ENCODE measurements at regions of chr10 and their contacts with region 1.

Region 1: GRCh38 chr10:18424200-18424599 is 227.2 kb downstream of the NSUN6 start:
- DNase-seq: no peak
- H3K4me3 ChIP-seq: no peak overlapping the region
- H3K27ac ChIP-seq: no peak overlapping the region
- H3K4me1 ChIP-seq: no peaks in the 10 kb centered on the region
- H3K27me3 ChIP-seq: no peaks in the 10 kb centered on the region
- CTCF ChIP-seq: no peak
- POLR2A ChIP-seq: no peak

Region 2: DNA sequence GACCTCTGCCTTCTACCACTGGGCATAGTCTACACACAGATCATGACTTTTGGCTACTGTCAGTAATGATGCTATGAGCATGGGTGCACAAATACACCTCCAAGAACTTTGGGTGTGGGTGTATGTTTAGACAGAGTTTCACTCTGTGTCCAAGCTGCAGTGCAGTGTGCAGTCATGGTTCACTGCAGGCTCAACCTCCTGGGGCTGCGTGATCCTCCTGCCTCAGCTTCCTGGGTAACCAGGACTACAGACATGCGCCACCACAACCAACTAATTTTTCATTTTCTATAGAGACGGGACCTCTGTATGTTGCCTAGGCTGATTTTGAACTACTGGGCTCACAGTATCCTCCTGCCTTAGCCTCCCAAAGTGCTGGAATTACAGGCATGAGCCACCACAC is 32.8 kb after region 1 on chr10:
- CTCF ChIA-PET with region 1: no interaction called
- POLR2A ChIA-PET with region 1: no interaction called
- dilution Hi-C with region 1: no loop called
- intact Hi-C with region 1: loop called (anchors 1 kb)
- DNase-seq: no peak
- H3K4me3 ChIP-seq: no peak overlapping the region
- H3K27ac ChIP-seq: no peak overlapping the region
- H3K4me1 ChIP-seq: no peaks in the 10 kb centered on the region
- H3K27me3 ChIP-seq: no peaks in the 10 kb centered on the region
- CTCF ChIP-seq: no peak
- POLR2A ChIP-seq: no peak

Region 3: GRCh38 chr10:18501198-18501597 is 77.0 kb after region 1 on chr10:
- CTCF ChIA-PET with region 1: no interaction called
- POLR2A ChIA-PET with region 1: no interaction called
- dilution Hi-C with region 1: no loop called
- intact Hi-C with region 1: no loop called
- DNase-seq: no peak
- H3K4me3 ChIP-seq: no peak overlapping the region
- H3K27ac ChIP-seq: no peak overlapping the region
- H3K4me1 ChIP-seq: no peaks in the 10 kb centered on the region
- H3K27me3 ChIP-seq: no peaks in the 10 kb centered on the region
- CTCF ChIP-seq: no peak
- POLR2A ChIP-seq: no peak